ENCODE measurements at regions of chr2 and their contacts with region 1.

Region 1: GRCh38 chr2:74250189-74250631 is 51.8 kb downstream of the MTHFD2 start:
- DNase-seq: peak; percentile 48
- ATAC-seq: peak; percentile 83
- H3K4me3 ChIP-seq: no peak overlapping the region
- H3K27ac ChIP-seq: no peak overlapping the region
- H3K4me1 ChIP-seq: no peaks in the 10 kb centered on the region
- H3K27me3 ChIP-seq: no peaks in the 10 kb centered on the region
- CTCF ChIP-seq: peak; percentile 89

Region 2: GRCh38 chr2:74198461-74199274 is 51.5 kb before region 1 on chr2 and contains the start of gene MTHFD2:
- CTCF ChIA-PET with region 1: no interaction called
- POLR2A ChIA-PET with region 1: no interaction called
- intact Hi-C with region 1: no loop called
- DNase-seq: peak; percentile 99
- ATAC-seq: peak; percentile 92
- H3K4me3 ChIP-seq: peak within 1 kb of the TSS; percentile 85
- H3K27ac ChIP-seq: peak within 1 kb of the TSS; percentile 78
- H3K4me1 ChIP-seq: peaks cover 26% of the 10 kb centered on the region
- H3K27me3 ChIP-seq: no peaks in the 10 kb centered on the region
- CTCF ChIP-seq: peak; percentile 71
- total RNA-seq, gene MTHFD2: 115 and 118 TPM in 2 replicates

Region 3: DNA sequence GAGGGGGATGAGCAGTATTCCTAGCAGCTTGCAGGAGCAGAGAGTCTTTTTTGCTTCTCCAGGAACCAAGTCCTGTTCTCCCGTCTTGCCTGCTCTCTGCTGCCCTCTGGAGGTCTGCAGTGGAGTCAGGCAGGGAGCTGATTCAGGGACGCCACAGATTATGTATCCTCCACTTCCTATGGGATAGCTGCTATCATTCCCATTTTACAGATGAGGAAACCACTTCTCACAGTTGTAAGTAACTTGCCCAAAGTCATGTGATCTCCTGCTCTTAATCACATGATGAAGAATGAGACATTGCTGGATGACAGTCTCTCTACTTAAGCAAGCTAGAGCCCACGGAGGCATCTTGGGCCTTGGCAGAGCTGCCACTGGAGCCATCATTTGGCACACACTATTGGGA is 84.7 kb after region 1 on chr2:
- CTCF ChIA-PET with region 1: interaction called, 10 read pairs
- POLR2A ChIA-PET with region 1: no interaction called
- intact Hi-C with region 1: loop called (anchors 1 kb)
- DNase-seq: peak; percentile 82
- ATAC-seq: peak; percentile 95
- H3K4me3 ChIP-seq: no peak overlapping the region
- H3K27ac ChIP-seq: no peak overlapping the region
- H3K4me1 ChIP-seq: no peaks in the 10 kb centered on the region
- H3K27me3 ChIP-seq: no peaks in the 10 kb centered on the region
- CTCF ChIP-seq: peak; percentile 88

Region 4: GRCh38 chr2:74421221-74421870 is 171.1 kb after region 1 on chr2 and contains the starts of genes C2orf81 and WDR54:
- CTCF ChIA-PET with region 1: no interaction called
- POLR2A ChIA-PET with region 1: no interaction called
- intact Hi-C with region 1: no loop called
- DNase-seq: peak; percentile 94
- ATAC-seq: peak; percentile 85
- H3K4me3 ChIP-seq: peak within 1 kb of the TSS; percentile 88
- H3K27ac ChIP-seq: peak within 1 kb of the TSS; percentile 49
- H3K4me1 ChIP-seq: peaks cover 6% of the 10 kb centered on the region; the same call in 1 of the 2 replicates
- H3K27me3 ChIP-seq: no peaks in the 10 kb centered on the region
- CTCF ChIP-seq: no peak
- total RNA-seq, gene C2orf81: 1.6 and 2.4 TPM in 2 replicates
- total RNA-seq, gene WDR54: 38.8 and 41.0 TPM in 2 replicates